ENCODE measurements at regions of chr2 and their contacts with region 1.

Region 1: GRCh38 chr2:57906152-57906732 is 140.4 kb upstream of the VRK2 start:
- DNase-seq: peak; percentile 46 to 57 (median 52)
- ATAC-seq: peak; percentile 99
- H3K4me3 ChIP-seq: no peak overlapping the region
- H3K27ac ChIP-seq: no peak overlapping the region
- H3K4me1 ChIP-seq: no peaks in the 10 kb centered on the region
- H3K27me3 ChIP-seq: peaks cover 0 to 3% of the 10 kb centered on the region in 2 experiments; a peak in 1 of 5 replicates
- CTCF ChIP-seq: peak; percentile 66 to 84 (median 69)
- EP300 ChIP-seq: no peak
- POLR2A ChIP-seq: no peak
- RAD21 ChIP-seq: peak; percentile 88 to 93

Region 2: GRCh38 chr2:57720728-57721627 is 185.3 kb before region 1 on chr2:
- CTCF ChIA-PET with region 1: no interaction called
- POLR2A ChIA-PET with region 1: no interaction called
- in situ Hi-C with region 1: no loop called
- intact Hi-C with region 1: loop called (anchors 5 kb)
- DNase-seq: peak; percentile 45 to 72 (median 52)
- ATAC-seq: peak; percentile 100
- H3K4me3 ChIP-seq: no peak overlapping the region
- H3K27ac ChIP-seq: no peak overlapping the region
- H3K4me1 ChIP-seq: no peaks in the 10 kb centered on the region
- H3K27me3 ChIP-seq: no peaks in the 10 kb centered on the region
- CTCF ChIP-seq: peak; percentile 63 to 83 (median 73)
- EP300 ChIP-seq: no peak
- POLR2A ChIP-seq: no peak
- RAD21 ChIP-seq: peak; percentile 55 to 76

Region 3: DNA sequence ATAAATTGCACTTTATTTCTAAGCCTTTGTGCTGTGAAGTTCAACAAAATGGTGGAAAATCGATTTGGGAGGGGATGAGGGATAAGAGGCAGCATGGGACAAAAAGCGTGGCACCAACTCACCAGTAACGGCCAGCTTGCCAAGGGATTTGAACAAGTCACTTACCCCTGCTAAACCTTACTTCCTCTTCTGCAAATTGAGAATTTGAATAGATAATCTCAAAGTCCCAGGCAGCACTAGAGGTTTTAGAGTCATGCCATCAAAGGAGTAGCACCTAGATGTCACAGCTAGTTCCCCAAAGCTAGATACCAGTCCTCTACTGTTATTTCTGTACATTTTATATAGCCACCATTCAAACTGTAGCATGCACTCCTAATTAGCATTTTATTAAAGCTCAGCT is 56.6 kb after region 1 on chr2:
- CTCF ChIA-PET with region 1: no interaction called
- POLR2A ChIA-PET with region 1: no interaction called
- in situ Hi-C with region 1: no loop called
- intact Hi-C with region 1: no loop called
- DNase-seq: peak in 1 of 4 experiments; percentile 8
- ATAC-seq: no peak
- H3K4me3 ChIP-seq: no peak overlapping the region
- H3K27ac ChIP-seq: 0 out of 3 replicates have a peak overlapping the region, but pooled peaks have one; percentile 11
- H3K4me1 ChIP-seq: no peaks in the 10 kb centered on the region; a peak in 1 of 5 replicates
- H3K27me3 ChIP-seq: no peaks in the 10 kb centered on the region
- CTCF ChIP-seq: no peak
- EP300 ChIP-seq: no peak
- POLR2A ChIP-seq: no peak
- RAD21 ChIP-seq: no peak

Region 4: DNA sequence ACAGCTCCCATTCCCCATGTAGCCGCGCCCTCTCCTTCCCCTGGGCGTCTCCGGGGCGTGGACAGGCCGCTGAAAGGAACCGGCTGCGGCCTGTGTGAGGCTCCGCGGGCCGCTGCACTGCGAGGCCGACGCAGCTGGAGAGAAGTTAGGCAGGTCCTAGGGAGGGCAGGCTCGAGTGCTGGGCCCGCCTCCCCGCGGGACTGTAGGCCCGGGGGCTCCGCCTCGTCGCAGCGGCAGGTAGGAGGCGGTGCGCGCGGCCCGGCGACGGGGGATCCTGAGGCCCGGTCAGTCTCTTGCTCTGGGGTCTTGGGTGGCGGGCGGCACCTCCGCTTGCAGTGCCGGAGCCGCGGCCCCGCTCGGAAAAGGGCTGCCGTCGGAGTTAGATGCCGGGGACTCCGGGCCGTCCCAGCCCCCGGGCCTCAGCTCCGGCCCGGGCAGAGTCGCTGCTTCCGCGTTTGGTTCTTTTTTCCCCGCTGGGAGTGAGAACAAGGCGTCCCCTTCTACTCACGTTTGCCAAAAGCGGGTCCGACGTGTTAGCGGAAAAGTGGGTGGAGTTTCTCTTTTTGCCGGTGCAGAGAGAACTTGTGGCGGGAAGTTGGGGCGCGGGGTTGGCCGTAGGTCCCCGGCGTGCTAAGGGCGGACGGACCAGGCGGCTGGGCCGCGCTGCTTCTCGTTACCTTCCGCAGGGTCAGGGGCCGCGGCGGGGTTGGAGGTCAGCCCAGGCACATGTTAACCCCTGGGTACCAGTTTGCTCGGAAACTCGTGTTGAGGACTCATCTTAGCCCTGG is 140.5 kb after region 1 on chr2 and contains the start of gene VRK2:
- CTCF ChIA-PET with region 1: no interaction called
- POLR2A ChIA-PET with region 1: no interaction called
- in situ Hi-C with region 1: no loop called
- intact Hi-C with region 1: loop called (anchors 2 kb)
- DNase-seq: peak; percentile 84 to 94 (median 86)
- ATAC-seq: peak; percentile 93
- H3K4me3 ChIP-seq: peak within 1 kb of the TSS; percentile 66
- H3K27ac ChIP-seq: peak within 1 kb of the TSS; percentile 93
- H3K4me1 ChIP-seq: peaks cover 14 to 19% of the 10 kb centered on the region in 2 experiments
- H3K27me3 ChIP-seq: no peaks in the 10 kb centered on the region
- CTCF ChIP-seq: peak in 2 of 3 experiments; percentile 11 to 24; a peak in 3 of 6 replicates
- EP300 ChIP-seq: no peak
- POLR2A ChIP-seq: peak; percentile 91
- RAD21 ChIP-seq: no peak
- polyA plus RNA-seq, gene VRK2: 22.6 to 30.1 TPM

Region 5: DNA sequence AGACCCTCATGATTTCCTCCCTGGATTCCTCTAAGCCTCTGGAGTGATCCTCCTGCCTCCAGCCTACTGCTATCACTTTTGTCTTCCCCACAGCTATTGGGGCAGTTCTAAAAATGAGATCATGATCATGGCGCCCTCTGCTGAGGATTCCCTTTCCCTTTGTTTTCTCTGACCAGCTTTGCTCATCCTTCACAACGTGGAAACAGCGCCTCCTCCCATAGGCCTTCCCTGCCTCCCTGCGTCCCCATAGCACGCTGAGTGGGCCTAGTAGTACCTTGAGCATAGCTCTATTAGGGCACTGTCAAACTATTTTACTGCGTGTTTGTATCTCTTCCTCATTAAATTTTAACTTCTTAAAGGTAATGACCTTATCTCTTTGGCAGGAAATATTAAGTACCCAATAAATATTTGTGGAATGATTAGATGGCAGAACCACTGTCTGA is 541.8 kb after region 1 on chr2:
- CTCF ChIA-PET with region 1: interaction called, 8 read pairs
- POLR2A ChIA-PET with region 1: no interaction called
- in situ Hi-C with region 1: loop called (anchors 25 kb)
- intact Hi-C with region 1: loop called (anchors 1 kb)
- DNase-seq: peak in 3 of 4 experiments; percentile 13 to 74 (median 38)
- ATAC-seq: peak; percentile 97
- H3K4me3 ChIP-seq: no peak overlapping the region
- H3K27ac ChIP-seq: no peak overlapping the region
- H3K4me1 ChIP-seq: no peaks in the 10 kb centered on the region
- H3K27me3 ChIP-seq: no peaks in the 10 kb centered on the region
- CTCF ChIP-seq: peak; percentile 67 to 81 (median 75)
- EP300 ChIP-seq: no peak
- POLR2A ChIP-seq: no peak
- RAD21 ChIP-seq: peak; percentile 65 to 79

Region 6: GRCh38 chr2:58571181-58571852 is 665.1 kb after region 1 on chr2:
- CTCF ChIA-PET with region 1: no interaction called
- POLR2A ChIA-PET with region 1: no interaction called
- in situ Hi-C with region 1: no loop called
- intact Hi-C with region 1: loop called (anchors 5 kb)
- DNase-seq: peak; percentile 46 to 85 (median 60)
- ATAC-seq: peak; percentile 99
- H3K4me3 ChIP-seq: no peak overlapping the region
- H3K27ac ChIP-seq: no peak overlapping the region; the same call in 2 of the 3 replicates
- H3K4me1 ChIP-seq: peaks cover 0 to 3% of the 10 kb centered on the region in 2 experiments; a peak in 1 of 5 replicates
- H3K27me3 ChIP-seq: no peaks in the 10 kb centered on the region
- CTCF ChIP-seq: peak; percentile 74 to 82 (median 76)
- EP300 ChIP-seq: no peak
- POLR2A ChIP-seq: no peak
- RAD21 ChIP-seq: peak; percentile 93 to 96